Gastrocnemius medialis (tissue), 4 donors: ENCODE measurements at regions of chr16 and their contacts with region 1.

Region 1: DNA sequence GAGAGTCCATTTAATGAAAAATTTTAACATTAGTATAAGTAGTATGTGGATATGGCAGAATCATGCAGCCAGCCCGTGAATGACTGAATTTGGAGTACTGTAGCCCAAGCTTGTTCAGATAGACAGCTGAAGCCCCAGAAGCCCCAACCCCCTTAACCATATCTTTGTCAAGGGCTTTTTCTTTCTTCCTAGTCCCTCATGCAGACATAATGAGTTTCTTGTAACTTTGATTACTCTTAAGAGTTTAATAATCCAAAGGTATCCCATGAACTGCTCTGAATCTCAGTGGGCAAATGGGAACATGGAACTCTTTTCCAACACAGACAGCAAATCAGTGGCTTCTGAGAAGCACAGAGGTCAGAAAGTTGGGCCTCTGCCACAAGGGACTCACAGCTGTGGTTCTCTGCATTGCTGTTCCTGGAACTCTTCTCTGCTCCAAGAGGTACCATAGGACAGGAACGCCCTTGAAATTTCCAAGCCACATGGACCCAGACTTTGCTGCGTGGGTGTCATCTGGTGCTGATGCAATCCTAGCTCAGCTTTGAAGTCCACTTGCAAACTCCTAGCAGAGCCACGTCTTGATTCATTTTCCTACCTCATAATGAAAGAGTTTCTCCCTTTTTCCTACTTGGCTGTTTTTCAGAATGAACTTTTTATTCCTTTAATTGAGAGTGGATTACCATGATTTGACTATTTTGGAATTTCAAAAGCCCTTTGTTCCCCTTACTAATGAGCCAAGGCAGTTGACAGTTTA is 18.1 kb downstream of the LYRM1 start:
- DNase-seq: peak; percentile 31 to 71
- ATAC-seq: peak; percentile 79 to 81
- H3K4me3 ChIP-seq: no peak overlapping the region
- H3K27ac ChIP-seq: peak overlapping the region in 3 of 4 donors; percentile 15 to 21 (median 17)
- H3K4me1 ChIP-seq: peaks cover 8 to 9% of the 10 kb centered on the region in 2 donors
- H3K27me3 ChIP-seq: no peaks in the 10 kb centered on the region
- CTCF ChIP-seq: no peak
- POLR2A ChIP-seq: no peak

Region 2: DNA sequence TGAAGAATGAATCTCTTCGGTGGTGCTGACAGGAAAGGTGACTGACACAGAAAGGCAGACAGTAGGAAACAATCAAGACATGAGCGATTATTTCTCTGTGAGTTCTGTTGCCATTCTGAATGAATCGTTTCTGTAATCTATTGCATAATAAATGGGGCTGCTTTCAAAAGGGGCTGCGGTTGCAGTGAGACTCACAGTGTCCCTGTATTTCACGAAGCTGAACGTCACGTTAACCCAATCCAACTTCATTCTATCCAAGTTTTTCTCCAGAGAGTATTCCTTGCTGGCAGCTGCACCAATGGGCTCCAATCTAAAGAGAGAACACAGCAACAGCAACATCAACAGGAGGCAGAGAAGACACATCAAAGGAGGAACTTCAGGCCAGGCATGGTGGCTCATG is 156.6 kb after region 1 on chr16:
- in situ Hi-C with region 1: no loop called
- intact Hi-C with region 1: loop called (anchors 5 kb)
- DNase-seq: peak; percentile 6 to 51
- ATAC-seq: peak; percentile 68
- H3K4me3 ChIP-seq: no peak overlapping the region
- H3K27ac ChIP-seq: no peak overlapping the region
- H3K4me1 ChIP-seq: no peaks in the 10 kb centered on the region
- H3K27me3 ChIP-seq: no peaks in the 10 kb centered on the region
- CTCF ChIP-seq: no peak
- POLR2A ChIP-seq: no peak